ENCODE measurements at regions of chr1 and their contacts with region 1.

Region 1: GRCh38 chr1:99481391-99481996 is 164.4 kb upstream of the PALMD start:
- DNase-seq: peak; percentile 49
- ATAC-seq: peak; percentile 78
- H3K4me3 ChIP-seq: no peak overlapping the region
- H3K27ac ChIP-seq: no peak overlapping the region
- H3K4me1 ChIP-seq: no peaks in the 10 kb centered on the region
- H3K27me3 ChIP-seq: no peaks in the 10 kb centered on the region
- CTCF ChIP-seq: peak; percentile 68 to 85 (median 75); a peak in 5 of 6 replicates
- POLR2A ChIP-seq: no peak
- RAD21 ChIP-seq: peak; percentile 85

Region 2: DNA sequence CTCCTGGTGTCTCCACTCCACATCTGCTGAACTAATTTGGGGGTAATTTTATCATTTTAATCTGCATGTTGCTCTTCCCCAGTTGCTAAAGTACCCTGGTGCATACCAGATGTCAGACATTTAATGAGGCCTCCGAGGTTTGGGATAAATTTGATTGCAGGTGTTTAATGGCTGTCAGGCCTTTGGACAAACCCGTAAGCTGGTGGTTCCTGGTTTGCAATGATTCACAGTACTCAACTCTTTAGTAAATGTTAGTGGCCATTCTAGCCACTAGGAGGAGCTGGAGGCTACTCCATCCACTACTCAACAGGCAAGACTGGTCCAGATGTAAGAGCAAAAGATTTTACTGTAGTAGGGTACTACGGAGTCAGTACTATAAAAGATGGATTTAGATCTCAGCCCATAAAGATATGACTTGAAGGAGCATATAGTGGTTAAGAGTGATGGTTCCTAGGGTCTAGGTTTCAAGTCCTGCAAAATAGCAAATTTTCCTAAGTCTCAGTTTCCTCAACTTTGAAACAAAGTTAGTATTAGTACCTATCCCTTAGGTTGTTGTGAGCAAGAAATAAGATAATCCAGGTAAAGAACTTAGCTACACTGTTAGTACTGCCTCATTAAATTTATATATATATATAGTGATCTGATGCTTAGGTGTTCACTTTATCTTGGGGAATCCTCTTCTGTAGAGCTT is 687.2 kb before region 1 on chr1:
- CTCF ChIA-PET with region 1: interaction called, 9 read pairs
- POLR2A ChIA-PET with region 1: no interaction called
- RAD21 ChIA-PET with region 1: interaction called, 3 read pairs
- intact Hi-C with region 1: loop called (anchors 1 kb)
- DNase-seq: peak; percentile 48
- ATAC-seq: peak; percentile 92
- H3K4me3 ChIP-seq: no peak overlapping the region
- H3K27ac ChIP-seq: no peak overlapping the region
- H3K4me1 ChIP-seq: no peaks in the 10 kb centered on the region
- H3K27me3 ChIP-seq: no peaks in the 10 kb centered on the region
- CTCF ChIP-seq: peak; percentile 46 to 80 (median 69); a peak in 5 of 6 replicates
- POLR2A ChIP-seq: no peak
- RAD21 ChIP-seq: peak; percentile 67

Region 3: GRCh38 chr1:98884864-98885263 is 596.6 kb before region 1 on chr1:
- CTCF ChIA-PET with region 1: no interaction called
- POLR2A ChIA-PET with region 1: no interaction called
- RAD21 ChIA-PET with region 1: no interaction called
- intact Hi-C with region 1: loop called (anchors 5 kb)
- DNase-seq: no peak
- ATAC-seq: no peak
- H3K4me3 ChIP-seq: no peak overlapping the region
- H3K27ac ChIP-seq: no peak overlapping the region
- H3K4me1 ChIP-seq: no peaks in the 10 kb centered on the region
- H3K27me3 ChIP-seq: no peaks in the 10 kb centered on the region
- CTCF ChIP-seq: no peak
- POLR2A ChIP-seq: no peak
- RAD21 ChIP-seq: no peak

Region 4: GRCh38 chr1:98991127-98992012 is 490.1 kb before region 1 on chr1:
- CTCF ChIA-PET with region 1: no interaction called
- POLR2A ChIA-PET with region 1: no interaction called
- RAD21 ChIA-PET with region 1: no interaction called
- intact Hi-C with region 1: loop called (anchors 2 kb)
- DNase-seq: peak; percentile 40
- ATAC-seq: peak; percentile 84
- H3K4me3 ChIP-seq: no peak overlapping the region
- H3K27ac ChIP-seq: no peak overlapping the region
- H3K4me1 ChIP-seq: 0 out of 4 replicates have a peak, but pooled peaks cover 0 to 5% of the 10 kb centered on the region in 2 experiments
- H3K27me3 ChIP-seq: no peaks in the 10 kb centered on the region
- CTCF ChIP-seq: peak; percentile 28 to 78 (median 59); a peak in 5 of 6 replicates
- POLR2A ChIP-seq: no peak
- RAD21 ChIP-seq: peak; percentile 49

Region 5: GRCh38 chr1:99180343-99180808 is 301.1 kb before region 1 on chr1:
- CTCF ChIA-PET with region 1: interaction called, 24 read pairs
- POLR2A ChIA-PET with region 1: interaction called, 3 read pairs
- RAD21 ChIA-PET with region 1: interaction called in 1 of 2 experiments, 4 read pairs
- intact Hi-C with region 1: loop called (anchors 1 kb)
- DNase-seq: peak; percentile 79
- ATAC-seq: peak; percentile 97
- H3K4me3 ChIP-seq: no peak overlapping the region
- H3K27ac ChIP-seq: peak overlapping the region; percentile 38; the same call in 1 of the 2 replicates
- H3K4me1 ChIP-seq: peaks cover 2 to 3% of the 10 kb centered on the region in 2 experiments; a peak in 3 of 4 replicates
- H3K27me3 ChIP-seq: no peaks in the 10 kb centered on the region
- CTCF ChIP-seq: peak; percentile 71 to 83 (median 82)
- POLR2A ChIP-seq: no peak
- RAD21 ChIP-seq: peak; percentile 90

Region 6: DNA sequence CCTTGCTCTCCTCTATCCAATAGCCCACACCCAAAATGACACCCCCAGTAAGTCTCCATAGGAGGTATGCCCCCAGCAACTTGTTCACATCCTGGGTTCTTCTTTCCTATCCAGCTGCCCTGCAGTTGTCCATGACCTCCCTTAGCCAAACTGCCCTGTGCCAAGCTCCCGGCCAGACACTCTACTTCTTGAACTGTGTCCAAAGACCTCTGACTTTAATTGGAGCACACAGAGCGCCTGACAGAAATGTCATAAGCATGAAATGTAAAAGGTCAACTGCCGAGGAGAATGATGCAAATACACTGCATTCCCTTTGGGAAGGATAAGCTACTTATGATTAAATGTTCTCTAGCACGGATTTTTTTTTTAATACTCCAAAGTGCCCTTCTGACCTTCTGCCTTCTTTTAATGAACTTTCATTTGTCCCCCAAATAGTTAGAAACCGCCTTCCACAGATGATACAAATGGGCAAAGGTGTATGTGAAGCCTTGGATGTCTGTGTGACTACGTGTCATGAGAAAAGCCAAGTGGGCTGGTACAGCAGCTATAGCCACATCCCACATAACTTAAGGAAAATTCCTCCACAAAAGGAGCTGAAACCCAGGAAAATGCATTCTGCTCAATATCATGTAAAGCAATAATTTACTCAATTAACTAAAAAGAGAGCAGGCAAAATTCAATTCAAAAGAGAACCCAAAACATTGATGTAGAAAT is 191.2 kb after region 1 on chr1:
- CTCF ChIA-PET with region 1: no interaction called
- POLR2A ChIA-PET with region 1: no interaction called
- RAD21 ChIA-PET with region 1: no interaction called
- intact Hi-C with region 1: no loop called
- DNase-seq: no peak
- ATAC-seq: no peak
- H3K4me3 ChIP-seq: no peak overlapping the region
- H3K27ac ChIP-seq: no peak overlapping the region
- H3K4me1 ChIP-seq: no peaks in the 10 kb centered on the region
- H3K27me3 ChIP-seq: no peaks in the 10 kb centered on the region
- CTCF ChIP-seq: no peak
- POLR2A ChIP-seq: no peak
- RAD21 ChIP-seq: no peak

Region 7: GRCh38 chr1:99707535-99708142 is 226.1 kb after region 1 on chr1:
- CTCF ChIA-PET with region 1: no interaction called
- POLR2A ChIA-PET with region 1: no interaction called
- RAD21 ChIA-PET with region 1: no interaction called
- intact Hi-C with region 1: loop called (anchors 5 kb)
- DNase-seq: peak; percentile 35
- ATAC-seq: peak; percentile 71
- H3K4me3 ChIP-seq: no peak overlapping the region
- H3K27ac ChIP-seq: no peak overlapping the region
- H3K4me1 ChIP-seq: no peaks in the 10 kb centered on the region
- H3K27me3 ChIP-seq: no peaks in the 10 kb centered on the region
- CTCF ChIP-seq: peak; percentile 45 to 97 (median 86); a peak in 5 of 6 replicates
- POLR2A ChIP-seq: no peak
- RAD21 ChIP-seq: peak; percentile 78